ENCODE measurements at regions of chr6 and their contacts with region 1.

Region 1: GRCh38 chr6:94636780-94637385 is 940.5 kb upstream of the MANEA start:
- DNase-seq: peak; percentile 17
- ATAC-seq: peak; percentile 64
- H3K4me3 ChIP-seq: no peak overlapping the region
- H3K27ac ChIP-seq: no peak overlapping the region
- H3K4me1 ChIP-seq: no peaks in the 10 kb centered on the region
- H3K27me3 ChIP-seq: no peaks in the 10 kb centered on the region
- CTCF ChIP-seq: peak; percentile 43; the same call in 1 of the 2 replicates

Region 2: GRCh38 chr6:94323853-94324252 is 313.0 kb before region 1 on chr6:
- CTCF ChIA-PET with region 1: no interaction called
- POLR2A ChIA-PET with region 1: no interaction called
- intact Hi-C with region 1: loop called (anchors 10 kb)
- DNase-seq: peak; percentile 17
- ATAC-seq: peak; percentile 74
- H3K4me3 ChIP-seq: no peak overlapping the region
- H3K27ac ChIP-seq: no peak overlapping the region
- H3K4me1 ChIP-seq: no peaks in the 10 kb centered on the region
- H3K27me3 ChIP-seq: no peaks in the 10 kb centered on the region
- CTCF ChIP-seq: peak; percentile 35

Region 3: GRCh38 chr6:94362061-94362864 is 274.6 kb before region 1 on chr6:
- CTCF ChIA-PET with region 1: no interaction called
- POLR2A ChIA-PET with region 1: no interaction called
- intact Hi-C with region 1: no loop called
- DNase-seq: no peak
- ATAC-seq: no peak
- H3K4me3 ChIP-seq: no peak overlapping the region
- H3K27ac ChIP-seq: no peak overlapping the region
- H3K4me1 ChIP-seq: no peaks in the 10 kb centered on the region
- H3K27me3 ChIP-seq: no peaks in the 10 kb centered on the region
- CTCF ChIP-seq: no peak

Region 4: DNA sequence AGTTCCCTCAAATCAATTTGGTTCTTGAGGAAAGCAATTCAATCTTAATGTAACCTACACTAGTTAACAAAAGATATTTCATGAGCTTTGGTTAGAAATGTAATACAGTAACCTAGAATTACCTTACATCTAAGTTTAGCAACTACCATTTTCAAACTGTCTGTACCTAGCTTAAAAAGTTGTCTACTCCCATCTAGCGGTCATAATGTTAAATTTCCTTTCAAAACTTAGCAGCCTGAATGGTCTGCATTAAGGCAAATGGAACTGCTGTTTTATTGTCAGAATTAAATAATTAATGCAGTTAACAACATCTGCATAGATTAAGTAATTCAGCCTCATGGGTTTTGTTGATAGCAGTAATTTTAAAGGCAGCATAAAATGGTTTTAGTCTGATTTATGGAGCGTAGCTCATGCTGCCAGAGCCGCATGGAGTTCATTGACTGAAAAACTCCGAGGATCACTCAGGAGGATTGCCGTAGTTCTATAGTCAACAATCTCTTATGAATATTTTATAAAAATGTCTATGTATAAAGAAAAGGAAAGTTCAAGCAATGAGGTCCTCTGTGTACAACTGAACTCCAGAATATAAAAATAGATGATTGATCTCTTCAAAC is 455.0 kb after region 1 on chr6:
- CTCF ChIA-PET with region 1: no interaction called
- POLR2A ChIA-PET with region 1: no interaction called
- intact Hi-C with region 1: loop called (anchors 1 kb)
- DNase-seq: peak; percentile 67
- ATAC-seq: peak; percentile 57
- H3K4me3 ChIP-seq: no peak overlapping the region
- H3K27ac ChIP-seq: no peak overlapping the region
- H3K4me1 ChIP-seq: peaks cover 5% of the 10 kb centered on the region; the same call in 1 of the 2 replicates
- H3K27me3 ChIP-seq: no peaks in the 10 kb centered on the region
- CTCF ChIP-seq: peak; percentile 71

Region 5: DNA sequence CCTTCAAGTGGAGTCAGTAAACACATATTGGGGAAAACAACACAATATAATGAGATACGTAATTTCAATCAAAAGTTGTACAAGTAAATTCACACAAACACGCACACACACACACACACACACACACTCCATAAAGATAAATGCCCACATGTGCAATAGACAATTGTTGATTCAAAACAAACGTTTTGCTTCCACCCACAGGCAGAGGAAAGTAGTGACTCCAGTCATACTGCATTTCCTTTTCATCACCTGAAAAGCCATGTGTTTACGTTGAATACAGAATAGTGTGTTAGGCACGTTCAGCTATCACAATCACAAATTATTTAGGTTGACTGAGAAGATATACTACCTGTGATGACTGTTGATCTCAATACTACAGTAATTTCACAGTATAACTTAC is 496.7 kb after region 1 on chr6:
- CTCF ChIA-PET with region 1: no interaction called
- POLR2A ChIA-PET with region 1: no interaction called
- intact Hi-C with region 1: loop called (anchors 2 kb)
- DNase-seq: peak; percentile 27
- ATAC-seq: peak; percentile 43; the same call in 1 of the 2 replicates
- H3K4me3 ChIP-seq: no peak overlapping the region
- H3K27ac ChIP-seq: no peak overlapping the region
- H3K4me1 ChIP-seq: no peaks in the 10 kb centered on the region
- H3K27me3 ChIP-seq: no peaks in the 10 kb centered on the region
- CTCF ChIP-seq: peak; percentile 51